ENCODE measurements at regions of chr12 and their contacts with region 1.

Region 1: GRCh38 chr12:105107494-105108371 is at the start of gene WASHC4:
- DNase-seq: peak; percentile 86 to 95 (median 93)
- ATAC-seq: peak; percentile 94
- H3K4me3 ChIP-seq: peak within 1 kb of the TSS; percentile 81 to 96
- H3K4me3 Mint-ChIP-seq: peak within 1 kb of the TSS; percentile 96
- H3K27ac ChIP-seq: peak within 1 kb of the TSS; percentile 91 to 92
- H3K27ac Mint-ChIP-seq: peak within 1 kb of the TSS; percentile 97
- H3K4me1 ChIP-seq: peaks cover 25% of the 10 kb centered on the region
- H3K4me1 Mint-ChIP-seq: peaks cover 37% of the 10 kb centered on the region
- H3K27me3 ChIP-seq: peaks cover 0 to 3% of the 10 kb centered on the region in 2 experiments
- H3K27me3 Mint-ChIP-seq: peaks cover 14% of the 10 kb centered on the region
- CTCF ChIP-seq: no peak
- total RNA-seq, gene WASHC4: 26.1 to 26.9 TPM

Region 2: DNA sequence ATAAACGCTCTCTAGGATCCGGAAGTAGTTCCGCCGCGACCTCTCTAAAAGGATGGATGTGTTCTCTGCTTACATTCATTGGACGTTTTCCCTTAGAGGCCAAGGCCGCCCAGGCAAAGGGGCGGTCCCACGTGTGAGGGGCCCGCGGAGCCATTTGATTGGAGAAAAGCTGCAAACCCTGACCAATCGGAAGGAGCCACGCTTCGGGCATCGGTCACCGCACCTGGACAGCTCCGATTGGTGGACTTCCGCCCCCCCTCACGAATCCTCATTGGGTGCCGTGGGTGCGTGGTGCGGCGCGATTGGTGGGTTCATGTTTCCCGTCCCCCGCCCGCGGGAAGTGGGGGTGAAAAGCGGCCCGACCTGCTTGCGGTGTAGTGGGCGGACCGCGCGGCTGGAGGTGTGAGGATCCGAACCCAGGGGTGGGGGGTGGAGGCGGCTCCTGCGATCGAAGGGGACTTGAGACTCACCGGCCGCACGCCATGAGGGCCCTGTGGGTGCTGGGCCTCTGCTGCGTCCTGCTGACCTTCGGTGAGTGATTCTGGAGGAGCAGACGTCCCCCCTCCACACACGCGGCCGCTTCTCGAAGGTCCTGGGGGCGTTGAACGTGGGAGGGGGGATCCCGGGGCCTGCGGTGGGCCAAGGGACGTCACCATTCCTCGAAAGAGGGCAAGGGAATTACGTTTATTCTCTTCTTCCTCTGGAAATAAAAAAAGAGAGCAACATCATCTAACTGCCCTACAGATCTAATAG is 1177.5 kb before region 1 on chr12 and contains the start of gene HSP90B1:
- CTCF ChIA-PET with region 1: no interaction called
- POLR2A ChIA-PET with region 1: interaction called, 5 read pairs
- intact Hi-C with region 1: loop called (anchors 1 to 10 kb)
- DNase-seq: peak; percentile 99 to 100 (median 99)
- ATAC-seq: peak; percentile 74
- H3K4me3 ChIP-seq: peak within 1 kb of the TSS; percentile 67 to 91
- H3K4me3 Mint-ChIP-seq: peak within 1 kb of the TSS; percentile 83
- H3K27ac ChIP-seq: peak within 1 kb of the TSS; percentile 96 to 98
- H3K27ac Mint-ChIP-seq: peak within 1 kb of the TSS; percentile 97
- H3K4me1 ChIP-seq: peaks cover 43% of the 10 kb centered on the region
- H3K4me1 Mint-ChIP-seq: peaks cover 64% of the 10 kb centered on the region
- H3K27me3 ChIP-seq: no peaks in the 10 kb centered on the region
- H3K27me3 Mint-ChIP-seq: no peaks in the 10 kb centered on the region
- CTCF ChIP-seq: no peak
- total RNA-seq, gene HSP90B1: 173 to 179 TPM

Region 3: DNA sequence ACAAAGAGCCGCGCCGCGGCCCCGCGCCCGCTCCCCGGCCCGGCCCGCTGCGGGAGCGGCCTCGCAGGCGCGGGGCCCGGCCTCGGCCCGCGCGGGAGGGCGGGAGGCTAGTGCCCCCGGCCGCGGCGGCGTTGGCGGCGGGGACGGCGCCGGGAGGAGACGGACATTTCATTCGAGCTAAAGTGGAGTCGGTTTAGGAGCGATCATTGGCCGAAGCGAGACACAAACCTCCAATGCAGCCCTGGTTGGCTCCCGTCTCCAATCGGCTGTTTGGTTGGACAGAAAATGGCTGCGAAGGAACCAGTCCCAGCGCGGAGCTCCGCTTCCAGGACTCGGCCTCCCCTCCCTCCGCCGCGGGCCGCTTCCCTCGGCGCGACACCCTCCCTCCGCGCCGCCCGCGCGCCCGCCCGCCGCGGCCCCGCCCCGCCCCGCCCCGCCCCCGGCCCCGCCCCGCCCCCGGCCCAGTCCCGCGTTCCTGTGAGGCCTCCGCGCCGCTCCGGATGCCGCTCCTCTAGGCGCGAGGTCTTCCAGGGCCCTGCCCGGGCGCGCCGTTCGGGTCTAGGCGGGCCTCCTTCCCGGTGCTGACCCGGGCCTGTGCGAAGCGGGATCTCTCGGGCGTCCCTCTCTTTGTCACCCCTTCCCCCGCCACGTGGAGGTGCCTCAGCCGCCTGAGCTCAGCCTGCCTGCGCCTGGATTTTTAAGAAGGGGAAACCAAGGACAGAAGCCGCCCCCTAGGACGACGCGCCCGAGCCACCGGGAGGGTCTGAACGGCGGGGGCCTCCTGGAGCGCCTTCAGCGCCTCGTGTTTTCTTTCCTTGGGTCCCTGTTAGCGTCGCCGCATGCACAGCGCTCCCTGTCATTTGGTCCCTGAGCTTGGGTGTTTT is 969.6 kb before region 1 on chr12 and contains the start of gene NFYB:
- CTCF ChIA-PET with region 1: no interaction called
- POLR2A ChIA-PET with region 1: interaction called, 4 read pairs
- intact Hi-C with region 1: loop called (anchors 1 to 5 kb)
- DNase-seq: peak; percentile 82 to 98 (median 90)
- ATAC-seq: peak; percentile 95
- H3K4me3 ChIP-seq: peak within 1 kb of the TSS; percentile 63 to 71
- H3K4me3 Mint-ChIP-seq: peak within 1 kb of the TSS; percentile 92
- H3K27ac ChIP-seq: peak within 1 kb of the TSS; percentile 57 to 58
- H3K27ac Mint-ChIP-seq: peak within 1 kb of the TSS; percentile 87
- H3K4me1 ChIP-seq: peaks cover 31% of the 10 kb centered on the region
- H3K4me1 Mint-ChIP-seq: peaks cover 16% of the 10 kb centered on the region
- H3K27me3 ChIP-seq: no peaks in the 10 kb centered on the region
- H3K27me3 Mint-ChIP-seq: no peaks in the 10 kb centered on the region
- CTCF ChIP-seq: no peak
- total RNA-seq, gene NFYB: 9.1 to 11.2 TPM

Region 4: GRCh38 chr12:104358347-104359003 is 749.3 kb before region 1 on chr12:
- CTCF ChIA-PET with region 1: interaction called, 3 read pairs
- POLR2A ChIA-PET with region 1: no interaction called
- intact Hi-C with region 1: loop called in 1 of 2 experiments (anchors 2 kb)
- DNase-seq: peak; percentile 38 to 80 (median 69)
- ATAC-seq: peak; percentile 98
- H3K4me3 ChIP-seq: no peak overlapping the region
- H3K4me3 Mint-ChIP-seq: no peak overlapping the region
- H3K27ac ChIP-seq: no peak overlapping the region
- H3K27ac Mint-ChIP-seq: no peak overlapping the region
- H3K4me1 ChIP-seq: no peaks in the 10 kb centered on the region
- H3K4me1 Mint-ChIP-seq: no peaks in the 10 kb centered on the region
- H3K27me3 ChIP-seq: no peaks in the 10 kb centered on the region
- H3K27me3 Mint-ChIP-seq: no peaks in the 10 kb centered on the region
- CTCF ChIP-seq: peak; percentile 83

Region 5: GRCh38 chr12:104986022-104986941 is 121.5 kb before region 1 on chr12 and contains the start of gene NOPCHAP1:
- CTCF ChIA-PET with region 1: no interaction called
- POLR2A ChIA-PET with region 1: no interaction called
- intact Hi-C with region 1: loop called in 1 of 2 experiments (anchors 1 kb)
- DNase-seq: peak; percentile 66 to 89 (median 82)
- ATAC-seq: peak; percentile 98
- H3K4me3 ChIP-seq: peak within 1 kb of the TSS; percentile 70 to 93
- H3K4me3 Mint-ChIP-seq: peak within 1 kb of the TSS; percentile 90
- H3K27ac ChIP-seq: peak within 1 kb of the TSS; percentile 33 to 55
- H3K27ac Mint-ChIP-seq: peak within 1 kb of the TSS; percentile 80
- H3K4me1 ChIP-seq: peaks cover 16% of the 10 kb centered on the region
- H3K4me1 Mint-ChIP-seq: peaks cover 35% of the 10 kb centered on the region
- H3K27me3 ChIP-seq: no peaks in the 10 kb centered on the region
- H3K27me3 Mint-ChIP-seq: no peaks in the 10 kb centered on the region
- CTCF ChIP-seq: no peak
- total RNA-seq, gene NOPCHAP1: 13.2 to 16.5 TPM

Region 6: DNA sequence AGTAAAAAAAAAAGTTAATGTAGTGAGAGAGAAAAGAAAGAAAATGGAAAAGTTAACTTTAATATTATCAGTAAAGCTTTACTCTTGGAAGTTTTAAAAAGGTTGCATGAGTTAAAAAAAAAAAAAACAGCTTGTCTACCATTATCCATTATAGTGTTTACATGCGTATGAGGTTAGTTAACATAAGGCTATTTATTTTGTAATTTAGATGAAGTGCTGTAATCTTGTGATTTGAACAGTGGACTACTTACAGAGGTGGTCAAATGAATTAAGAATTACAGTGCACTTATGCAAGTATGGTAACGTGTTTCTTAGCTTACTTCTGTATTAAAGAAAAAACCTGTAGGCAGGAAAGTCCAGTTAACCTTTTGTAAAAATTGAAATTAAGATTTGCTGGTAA is 30.5 kb after region 1 on chr12:
- CTCF ChIA-PET with region 1: no interaction called
- POLR2A ChIA-PET with region 1: no interaction called
- intact Hi-C with region 1: no loop called
- DNase-seq: no peak
- ATAC-seq: no peak
- H3K4me3 ChIP-seq: no peak overlapping the region
- H3K4me3 Mint-ChIP-seq: no peak overlapping the region
- H3K27ac ChIP-seq: no peak overlapping the region
- H3K27ac Mint-ChIP-seq: no peak overlapping the region
- H3K4me1 ChIP-seq: no peaks in the 10 kb centered on the region
- H3K4me1 Mint-ChIP-seq: peaks cover 24% of the 10 kb centered on the region
- H3K27me3 ChIP-seq: no peaks in the 10 kb centered on the region
- H3K27me3 Mint-ChIP-seq: no peaks in the 10 kb centered on the region
- CTCF ChIP-seq: no peak

Region 7: GRCh38 chr12:106955377-106956047 is 1847.8 kb after region 1 on chr12 and contains the start of gene TMEM263:
- CTCF ChIA-PET with region 1: no interaction called
- POLR2A ChIA-PET with region 1: no interaction called
- intact Hi-C with region 1: loop called in 1 of 2 experiments (anchors 5 kb)
- DNase-seq: peak; percentile 83 to 98 (median 93)
- ATAC-seq: peak; percentile 81
- H3K4me3 ChIP-seq: peak within 1 kb of the TSS; percentile 87 to 93
- H3K4me3 Mint-ChIP-seq: peak within 1 kb of the TSS; percentile 97
- H3K27ac ChIP-seq: peak within 1 kb of the TSS; percentile 76 to 90
- H3K27ac Mint-ChIP-seq: peak within 1 kb of the TSS; percentile 96
- H3K4me1 ChIP-seq: peaks cover 18% of the 10 kb centered on the region
- H3K4me1 Mint-ChIP-seq: peaks cover 41% of the 10 kb centered on the region
- H3K27me3 ChIP-seq: no peaks in the 10 kb centered on the region
- H3K27me3 Mint-ChIP-seq: no peaks in the 10 kb centered on the region
- CTCF ChIP-seq: no peak
- total RNA-seq, gene TMEM263: 34.3 to 35.3 TPM